Transverse colon (tissue), 4 donors: ENCODE measurements at regions of chr19 and their contacts with region 1.

Region 1: GRCh38 chr19:7366701-7367420 is 18.1 kb downstream of the ARHGEF18 start:
- DNase-seq: no peak
- H3K4me3 ChIP-seq: no peak overlapping the region
- H3K27ac ChIP-seq: peak overlapping the region; percentile 46 to 67 (median 58)
- H3K4me1 ChIP-seq: peaks cover 0 to 21% (median 0%) of the 10 kb centered on the region in 4 donors
- H3K27me3 ChIP-seq: no peaks in the 10 kb centered on the region
- CTCF ChIP-seq: peak in 3 of 5 experiments; percentile 31 to 43 (median 38)
- EP300 ChIP-seq: no peak
- POLR2A ChIP-seq: no peak

Region 2: GRCh38 chr19:6737284-6738046 is 629.4 kb before region 1 on chr19 and contains the start of gene GPR108:
- in situ Hi-C with region 1: no loop called
- intact Hi-C with region 1: loop called (anchors 5 kb)
- DNase-seq: peak; percentile 100
- H3K4me3 ChIP-seq: peak within 1 kb of the TSS; percentile 49 to 95 (median 84)
- H3K27ac ChIP-seq: peak within 1 kb of the TSS; percentile 97 to 99 (median 98)
- H3K4me1 ChIP-seq: peaks cover 28 to 47% (median 40%) of the 10 kb centered on the region in 4 donors
- H3K27me3 ChIP-seq: no peaks in the 10 kb centered on the region
- CTCF ChIP-seq: no peak
- EP300 ChIP-seq: no peak
- POLR2A ChIP-seq: peak; percentile 65
- total RNA-seq, gene GPR108: 38.0 to 118 (median 90.6) TPM

Region 3: GRCh38 chr19:7550987-7551761 is 184.3 kb after region 1 on chr19:
- in situ Hi-C with region 1: loop called in 1 of 4 experiments (anchors 25 kb)
- intact Hi-C with region 1: no loop called
- DNase-seq: peak; percentile 81
- H3K4me3 ChIP-seq: peak overlapping the region in 3 of 4 donors; percentile 10 to 32 (median 21)
- H3K27ac ChIP-seq: peak overlapping the region in 2 of 4 donors; percentile 37 to 63
- H3K4me1 ChIP-seq: peaks cover 0 to 3% (median 1%) of the 10 kb centered on the region in 4 donors
- H3K27me3 ChIP-seq: no peaks in the 10 kb centered on the region
- CTCF ChIP-seq: no peak
- EP300 ChIP-seq: no peak
- POLR2A ChIP-seq: no peak

Region 4: GRCh38 chr19:7652061-7652641 is 285.3 kb after region 1 on chr19:
- in situ Hi-C with region 1: loop called in 1 of 4 experiments (anchors 25 kb)
- intact Hi-C with region 1: no loop called
- DNase-seq: peak; percentile 89
- H3K4me3 ChIP-seq: peak overlapping the region in 2 of 4 donors; percentile 17 to 36
- H3K27ac ChIP-seq: peak overlapping the region; percentile 14 to 44 (median 37)
- H3K4me1 ChIP-seq: peaks cover 4 to 6% (median 4%) of the 10 kb centered on the region in 4 donors
- H3K27me3 ChIP-seq: peaks cover 3% of the 10 kb centered on the region
- CTCF ChIP-seq: peak; percentile 97 to 99 (median 99)
- EP300 ChIP-seq: no peak
- POLR2A ChIP-seq: no peak